ENCODE measurements at regions of chr15 and their contacts with region 1.

Region 1: GRCh38 chr15:33021806-33022389 is 172.6 kb downstream of the FMN1 start:
- DNase-seq: peak; percentile 53
- H3K4me3 ChIP-seq: no peak overlapping the region
- H3K27ac ChIP-seq: peak overlapping the region; percentile 67
- H3K4me1 ChIP-seq: peaks cover 15% of the 10 kb centered on the region
- H3K27me3 ChIP-seq: no peaks in the 10 kb centered on the region
- CTCF ChIP-seq: peak; percentile 62 to 65

Region 2: DNA sequence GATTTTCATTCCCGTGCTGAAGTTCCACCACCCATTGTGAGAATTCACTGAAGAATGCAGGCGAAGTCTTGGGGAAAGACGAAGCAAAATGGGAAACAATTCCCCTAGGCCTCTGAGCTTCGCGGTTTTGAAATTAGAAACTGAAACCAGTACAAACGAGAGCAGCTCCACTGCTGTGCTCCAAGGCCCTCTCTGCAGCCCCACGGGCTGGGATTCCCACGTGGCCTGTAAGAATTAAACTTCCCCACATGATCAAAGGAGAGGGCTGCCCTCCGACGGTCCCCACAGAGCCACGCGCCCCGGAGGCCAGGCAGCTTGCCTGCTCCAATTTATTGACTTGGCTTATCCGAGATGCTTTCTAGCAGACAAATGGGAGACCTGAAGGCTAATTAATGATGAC is 160.1 kb before region 1 on chr15:
- CTCF ChIA-PET with region 1: no interaction called
- dilution Hi-C with region 1: no loop called
- in situ Hi-C with region 1: no loop called
- intact Hi-C with region 1: no loop called
- DNase-seq: peak; percentile 37
- H3K4me3 ChIP-seq: peak overlapping the region; percentile 13 to 35 (median 35)
- H3K27ac ChIP-seq: no peak overlapping the region
- H3K4me1 ChIP-seq: peaks cover 20% of the 10 kb centered on the region
- H3K27me3 ChIP-seq: no peaks in the 10 kb centered on the region
- CTCF ChIP-seq: no peak

Region 3: GRCh38 chr15:33074942-33075341 is 53.0 kb after region 1 on chr15:
- CTCF ChIA-PET with region 1: no interaction called
- dilution Hi-C with region 1: no loop called
- in situ Hi-C with region 1: loop called in 1 of 2 experiments (anchors 10 kb)
- intact Hi-C with region 1: loop called (anchors 1 kb)
- DNase-seq: peak; percentile 19
- H3K4me3 ChIP-seq: no peak overlapping the region
- H3K27ac ChIP-seq: no peak overlapping the region
- H3K4me1 ChIP-seq: no peaks in the 10 kb centered on the region
- H3K27me3 ChIP-seq: no peaks in the 10 kb centered on the region
- CTCF ChIP-seq: peak in 1 of 2 donors; percentile 55

Region 4: DNA sequence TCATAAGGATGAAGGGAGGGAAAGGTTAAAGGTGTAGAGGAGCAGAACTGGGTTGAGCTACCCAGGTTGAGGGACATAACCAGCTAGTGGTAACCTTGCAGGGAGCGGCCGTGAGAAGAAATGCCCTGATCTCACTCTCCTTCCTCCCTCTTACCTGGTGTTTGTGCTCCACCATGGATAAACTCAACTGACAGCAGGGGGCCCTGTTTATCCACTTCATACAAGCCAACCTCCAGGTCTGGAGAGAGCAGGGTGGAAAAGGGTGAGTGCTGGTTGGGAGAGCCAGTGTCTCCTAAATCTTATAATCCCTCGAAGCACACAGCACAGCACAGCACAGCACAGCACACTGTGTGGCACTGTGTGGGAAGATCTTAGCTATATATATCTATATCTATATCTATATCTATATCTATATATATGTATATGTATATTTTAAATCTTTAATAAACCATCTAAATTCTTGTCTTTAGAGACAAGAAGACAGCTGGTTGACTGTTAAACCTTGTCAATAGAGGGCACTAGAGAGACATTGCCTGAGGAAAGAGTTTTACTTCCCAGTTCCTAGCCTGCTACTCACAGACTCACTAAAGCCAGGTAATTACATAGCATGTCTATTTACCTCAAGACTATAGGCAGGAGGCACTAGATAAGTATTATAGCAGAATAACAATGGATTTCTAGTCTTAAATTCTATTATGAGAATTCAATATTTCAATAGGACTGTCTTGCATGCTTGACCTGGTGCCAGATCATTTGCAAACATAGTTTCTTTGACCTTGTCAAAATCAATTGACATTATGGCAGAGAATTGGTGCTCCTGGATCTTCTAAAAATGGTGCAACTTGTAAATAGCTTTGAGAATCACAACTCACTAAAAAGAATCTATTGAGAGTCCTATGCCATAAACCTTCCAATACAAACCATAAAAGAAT is 194.3 kb after region 1 on chr15:
- CTCF ChIA-PET with region 1: no interaction called
- dilution Hi-C with region 1: no loop called
- in situ Hi-C with region 1: no loop called
- intact Hi-C with region 1: loop called (anchors 5 kb)
- DNase-seq: peak; percentile 51
- H3K4me3 ChIP-seq: no peak overlapping the region
- H3K27ac ChIP-seq: no peak overlapping the region
- H3K4me1 ChIP-seq: no peaks in the 10 kb centered on the region
- H3K27me3 ChIP-seq: no peaks in the 10 kb centered on the region
- CTCF ChIP-seq: peak; percentile 63 to 73

Measured in mammary epithelial cell (primary cell).